IMR-90 (cell line): ENCODE measurements at regions of chr10 and their contacts with region 1.

Region 1: GRCh38 chr10:102604379-102604960 is 39.8 kb upstream of the TRIM8 start:
- DNase-seq: peak; percentile 92
- ATAC-seq: peak; percentile 55
- H3K4me3 ChIP-seq: no peak overlapping the region
- H3K27ac ChIP-seq: peak overlapping the region; percentile 86
- H3K4me1 ChIP-seq: peaks cover 42% of the 10 kb centered on the region
- H3K27me3 ChIP-seq: no peaks in the 10 kb centered on the region
- CTCF ChIP-seq: no peak
- POLR2A ChIP-seq: no peak
- RAD21 ChIP-seq: no peak

Region 2: GRCh38 chr10:102619281-102619981 is 15.0 kb after region 1 on chr10:
- CTCF ChIA-PET with region 1: no interaction called
- POLR2A ChIA-PET with region 1: no interaction called
- dilution Hi-C with region 1: no loop called
- in situ Hi-C with region 1: no loop called
- intact Hi-C with region 1: no loop called
- DNase-seq: no peak
- ATAC-seq: no peak
- H3K4me3 ChIP-seq: no peak overlapping the region
- H3K27ac ChIP-seq: 0 out of 2 replicates have a peak overlapping the region, but pooled peaks have one; percentile 12
- H3K4me1 ChIP-seq: peaks cover 32% of the 10 kb centered on the region
- H3K27me3 ChIP-seq: no peaks in the 10 kb centered on the region
- CTCF ChIP-seq: no peak
- POLR2A ChIP-seq: no peak
- RAD21 ChIP-seq: no peak

Region 3: DNA sequence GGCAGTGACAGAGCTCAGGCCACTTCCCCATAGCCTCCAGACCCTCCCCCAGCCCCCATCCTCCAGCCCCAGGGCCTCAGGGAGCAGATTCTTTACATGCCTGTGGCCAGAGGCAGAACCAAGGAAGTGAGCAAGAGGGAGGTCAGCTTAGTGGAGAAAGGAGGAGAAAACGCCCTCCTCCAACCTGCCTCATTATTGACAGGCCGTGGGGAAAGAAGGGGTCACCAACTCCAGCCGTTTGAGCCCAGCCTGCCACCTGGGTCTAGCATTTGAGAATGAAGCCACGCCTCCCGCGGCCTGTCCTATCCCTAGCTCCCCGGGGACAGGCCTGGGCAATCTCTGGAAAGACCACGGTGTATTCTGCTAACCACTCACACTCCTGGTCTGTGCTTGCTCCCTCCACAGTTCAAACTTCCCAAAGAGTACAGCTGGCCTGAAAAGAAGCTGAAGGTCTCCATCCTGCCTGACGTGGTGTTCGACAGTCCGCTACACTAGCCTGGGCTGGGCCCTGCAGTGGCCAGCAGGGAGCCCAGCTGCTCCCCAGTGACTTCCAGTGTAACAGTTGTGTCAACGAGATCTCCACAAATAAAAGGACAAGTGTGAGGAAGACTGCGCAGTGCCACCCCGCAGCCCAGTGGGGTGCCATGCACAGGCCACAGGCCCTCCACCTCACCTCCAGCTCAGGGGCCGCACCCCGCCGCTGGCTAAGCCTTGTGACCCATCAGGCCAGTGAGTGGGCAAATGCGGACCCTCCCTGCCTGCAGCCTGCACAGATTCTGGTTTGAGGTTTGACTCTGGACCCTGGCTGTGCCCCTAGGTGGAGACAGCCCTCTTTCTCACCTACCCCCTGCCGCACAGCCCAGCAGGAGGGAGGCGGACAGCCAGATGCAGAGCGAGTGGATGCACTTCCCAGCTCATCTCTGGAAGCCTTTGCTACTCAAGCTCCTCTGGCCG is 25.5 kb after region 1 on chr10:
- CTCF ChIA-PET with region 1: no interaction called
- POLR2A ChIA-PET with region 1: interaction called, 11 read pairs
- dilution Hi-C with region 1: no loop called
- in situ Hi-C with region 1: no loop called
- intact Hi-C with region 1: no loop called
- DNase-seq: peak; percentile 91
- ATAC-seq: peak; percentile 75
- H3K4me3 ChIP-seq: no peak overlapping the region
- H3K27ac ChIP-seq: peak overlapping the region; percentile 98
- H3K4me1 ChIP-seq: peaks cover 77% of the 10 kb centered on the region
- H3K27me3 ChIP-seq: no peaks in the 10 kb centered on the region
- CTCF ChIP-seq: no peak
- POLR2A ChIP-seq: no peak
- RAD21 ChIP-seq: no peak